ENCODE measurements at regions of chr17 and their contacts with region 1.

Region 1: DNA sequence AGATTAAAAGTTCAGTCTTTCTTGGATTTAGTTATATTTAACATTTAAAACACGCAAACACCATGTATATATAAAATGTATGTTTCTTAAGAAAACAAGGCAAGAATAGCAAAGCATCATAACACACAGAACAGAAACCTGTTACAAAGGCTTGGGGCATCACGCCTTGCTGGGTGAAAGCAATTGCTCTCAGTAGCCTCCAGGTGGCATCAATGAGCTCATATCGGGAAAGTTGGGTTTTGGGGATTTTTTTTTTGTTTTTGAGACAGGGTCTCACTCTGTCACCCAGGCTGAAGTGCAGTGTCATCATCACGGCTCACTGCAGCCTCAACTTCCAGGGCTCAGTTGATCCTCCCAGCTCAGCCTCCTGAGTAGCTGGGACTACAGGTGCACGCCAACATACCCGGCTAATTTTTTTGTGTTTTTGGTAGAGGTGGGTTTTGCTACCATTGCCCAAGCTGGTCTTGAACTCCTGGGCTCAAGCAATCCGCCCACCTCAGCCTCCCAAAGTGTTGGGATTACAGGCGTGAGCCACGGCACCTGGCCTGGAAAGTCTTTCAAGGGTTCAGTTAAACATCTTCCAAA is 56.9 kb downstream of the CYB5D2 start:
- DNase-seq: no peak
- H3K4me3 ChIP-seq: no peak overlapping the region
- H3K27ac ChIP-seq: peak overlapping the region in 1 of 2 donors; percentile 29
- H3K4me1 ChIP-seq: peaks cover 0 to 41% (median 14%) of the 10 kb centered on the region in 4 donors
- H3K27me3 ChIP-seq: no peaks in the 10 kb centered on the region
- CTCF ChIP-seq: peak; percentile 65 to 69

Region 2: GRCh38 chr17:3990386-3991127 is 209.4 kb before region 1 on chr17:
- intact Hi-C with region 1: no loop called
- DNase-seq: peak in 1 of 2 donors; percentile 8
- H3K4me3 ChIP-seq: no peak overlapping the region
- H3K27ac ChIP-seq: no peak overlapping the region
- H3K4me1 ChIP-seq: peaks cover 0 to 27% (median 5%) of the 10 kb centered on the region in 4 donors
- H3K27me3 ChIP-seq: no peaks in the 10 kb centered on the region
- CTCF ChIP-seq: no peak

Region 3: DNA sequence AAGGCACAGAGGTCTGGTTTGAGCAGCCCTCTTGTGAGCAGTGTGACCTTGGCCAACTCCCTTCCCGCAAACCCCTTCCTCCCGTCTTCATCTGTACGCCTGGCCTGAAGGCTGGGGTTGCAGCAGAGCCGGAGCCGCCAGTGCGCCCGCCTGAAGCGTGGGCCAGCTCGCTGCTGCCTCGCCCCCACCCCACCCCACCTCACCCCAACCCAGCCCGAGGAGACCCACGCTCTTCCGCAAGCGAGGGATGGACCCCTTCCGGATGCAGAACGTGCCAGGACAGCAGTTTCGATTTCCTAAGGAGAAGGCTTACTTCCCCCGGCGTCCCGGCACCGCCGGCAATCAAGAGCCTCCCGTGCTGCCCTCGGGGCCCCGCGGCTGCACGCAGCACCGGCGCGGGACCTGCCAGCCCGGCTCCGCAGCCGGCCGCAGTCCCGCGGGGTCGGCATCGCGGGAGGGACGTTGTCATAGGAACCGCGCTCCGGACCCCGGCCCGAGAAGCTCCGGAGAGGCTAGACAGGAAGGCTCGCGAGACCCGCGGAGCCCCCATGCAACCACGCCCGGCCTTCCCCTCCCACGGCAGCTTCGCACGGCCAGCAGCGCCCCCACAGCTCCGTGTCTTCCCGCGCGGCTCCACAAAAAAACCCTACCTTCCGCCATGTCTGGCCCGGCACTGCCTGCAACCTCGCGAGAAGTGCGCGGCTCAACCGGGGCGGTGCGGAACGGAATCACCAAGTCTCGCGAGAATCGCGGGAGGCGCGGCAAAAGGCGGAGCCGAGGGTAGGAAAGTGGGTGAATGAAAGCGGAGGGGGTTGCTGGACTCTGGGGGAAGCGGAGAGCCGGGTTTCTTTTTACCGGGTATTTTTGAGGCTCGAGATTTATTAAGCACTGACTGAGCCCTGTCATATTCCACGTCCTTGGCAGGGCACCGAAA is 63.6 kb after region 1 on chr17 and contains the start of gene ANKFY1:
- intact Hi-C with region 1: loop called (anchors 10 kb)
- DNase-seq: peak; percentile 93 to 97
- H3K4me3 ChIP-seq: peak within 1 kb of the TSS; percentile 83 to 96
- H3K27ac ChIP-seq: peak within 1 kb of the TSS; percentile 80 to 87
- H3K4me1 ChIP-seq: peaks cover 4 to 31% (median 25%) of the 10 kb centered on the region in 4 donors
- H3K27me3 ChIP-seq: no peaks in the 10 kb centered on the region
- CTCF ChIP-seq: peak; percentile 11 to 29